Posterior vena cava (tissue), 2 donors: ENCODE measurements at regions of chr6 and their contacts with region 1.

Region 1: DNA sequence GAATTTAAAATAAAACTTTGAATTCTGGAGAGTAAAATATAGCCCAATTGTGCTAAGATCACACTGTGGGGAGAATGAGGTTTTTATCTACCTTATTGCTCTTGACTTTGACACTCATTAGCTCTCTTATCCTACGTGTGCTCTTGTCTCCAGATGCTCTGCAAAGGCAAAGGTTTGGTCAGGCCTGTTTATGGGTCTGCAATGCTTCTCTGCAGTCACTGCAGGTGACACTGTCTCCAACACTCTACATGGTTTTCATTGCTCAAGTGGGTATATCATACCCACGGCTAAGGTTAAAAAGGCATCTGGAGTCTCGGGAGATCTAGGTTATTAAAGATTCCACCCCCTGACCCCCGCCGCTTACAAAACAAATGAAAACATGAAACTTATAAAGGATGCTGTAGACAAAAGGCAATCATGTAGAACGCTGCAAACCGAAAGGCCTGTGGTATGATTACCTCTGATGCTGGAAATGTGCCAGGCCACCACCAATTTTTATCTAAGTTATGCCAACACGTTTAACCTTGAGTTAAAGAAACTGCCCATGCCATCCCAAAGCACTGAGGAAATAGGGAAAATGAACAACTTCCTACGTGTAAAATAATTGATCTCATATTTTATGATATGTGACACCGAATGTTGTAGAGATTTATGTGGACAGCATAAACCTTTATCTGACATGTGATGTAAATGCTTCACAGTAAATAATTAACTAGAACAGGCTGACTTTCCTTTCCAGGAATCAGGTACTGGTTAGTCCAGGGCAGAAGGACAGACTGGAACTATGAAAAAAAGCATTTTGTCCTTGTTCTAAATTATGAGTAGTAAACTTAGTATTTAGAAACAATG is 238.2 kb upstream of the NOX3 start:
- DNase-seq: no peak

Region 2: GRCh38 chr6:155678361-155678760 is 15.4 kb before region 1 on chr6:
- intact Hi-C with region 1: loop called in 1 of 2 experiments (anchors 2 kb)
- DNase-seq: no peak

Region 3: DNA sequence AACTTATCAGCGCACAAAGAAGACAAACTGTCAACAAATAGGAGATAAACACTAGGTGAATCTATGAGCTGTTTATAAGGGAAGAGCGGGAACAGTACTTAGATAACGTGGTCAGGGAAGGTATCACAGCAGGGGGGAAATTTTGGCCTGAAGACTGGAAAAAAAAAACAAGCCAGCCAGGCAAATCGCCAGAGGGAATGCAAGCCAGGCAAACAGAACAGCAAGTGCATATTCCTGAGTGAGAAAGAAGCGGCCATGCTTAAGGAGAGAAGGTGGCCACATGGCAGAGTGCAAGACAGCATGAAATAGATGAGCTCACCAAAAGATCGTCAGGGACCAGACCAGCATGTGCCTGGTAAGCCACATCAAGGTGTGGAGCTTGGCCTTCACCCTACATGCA is 616.9 kb after region 1 on chr6:
- intact Hi-C with region 1: no loop called
- DNase-seq: no peak